Activated T-helper 2 cell treated with anti-CD3 and anti-CD28 coated beads, Interferon-gamma antibody, Interleukin-2, Interleukin-4, amounts not matched to agents 10 μg/mL and 5 μg/mL and 100 μg/mL, durations not matched to agents 14 hours and 24 hours and 36 hours (primary cell): ENCODE measurements at regions of chr22 and their contacts with region 1.

Region 1: DNA sequence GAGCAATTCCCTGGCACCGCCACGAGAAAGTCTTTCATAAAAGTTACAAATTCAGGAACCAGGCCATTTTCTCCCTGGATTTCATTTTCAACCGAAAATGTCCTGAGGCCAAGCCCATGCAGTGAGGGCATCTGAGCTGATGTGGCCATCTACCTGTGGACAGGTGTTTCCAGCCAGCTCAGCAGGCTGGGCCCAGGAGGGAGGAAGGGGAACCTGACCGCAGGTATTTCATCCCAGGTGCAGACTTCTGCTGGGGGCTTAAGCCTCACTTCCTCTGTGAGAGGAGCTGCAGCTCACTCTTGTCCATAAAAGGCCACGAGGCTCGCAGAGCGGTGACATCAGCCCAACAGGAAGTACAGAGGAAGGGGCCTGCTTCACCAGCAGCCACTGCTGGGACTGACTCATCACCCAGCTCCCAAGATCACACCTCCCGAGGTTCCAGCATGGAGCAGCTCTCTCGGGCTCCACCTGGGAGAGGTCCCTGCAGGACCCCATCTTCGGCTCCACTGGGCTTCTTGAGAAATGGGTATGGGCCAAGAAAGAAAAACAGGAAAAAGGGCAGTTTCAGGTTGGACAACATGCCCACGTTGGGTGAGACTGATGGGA is 56.4 kb downstream of the MYH9 start:
- DNase-seq: peak; percentile 80
- H3K4me3 Mint-ChIP-seq: peak overlapping the region; percentile 90
- H3K27ac Mint-ChIP-seq: peak overlapping the region; percentile 99
- H3K4me1 Mint-ChIP-seq: peaks cover 88% of the 10 kb centered on the region
- H3K27me3 Mint-ChIP-seq: no peaks in the 10 kb centered on the region

Region 2: GRCh38 chr22:36359181-36359996 is 28.0 kb after region 1 on chr22:
- intact Hi-C with region 1: loop called (anchors 1 kb)
- DNase-seq: no peak
- H3K4me3 Mint-ChIP-seq: peak overlapping the region; percentile 64
- H3K27ac Mint-ChIP-seq: peak overlapping the region; percentile 85
- H3K4me1 Mint-ChIP-seq: peaks cover 78% of the 10 kb centered on the region
- H3K27me3 Mint-ChIP-seq: no peaks in the 10 kb centered on the region

Region 3: DNA sequence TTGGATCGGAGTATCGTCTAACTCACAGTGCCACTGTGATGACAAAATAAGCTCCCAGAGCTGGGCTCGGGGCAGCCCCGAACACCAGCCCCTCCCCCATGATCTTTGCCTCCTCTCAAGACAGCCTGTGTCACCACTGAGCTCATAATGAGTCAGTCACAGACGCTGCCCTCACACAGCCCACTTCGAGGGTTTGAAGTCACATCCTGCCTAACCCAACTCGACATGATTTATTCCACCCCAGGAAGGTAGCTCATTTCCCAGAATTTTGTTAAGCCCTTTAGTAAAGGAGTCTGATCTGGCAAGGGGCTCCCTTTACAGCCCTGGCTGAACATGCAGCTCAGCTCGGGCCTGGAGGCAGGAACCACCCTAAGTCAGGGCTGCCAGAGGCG is 33.6 kb after region 1 on chr22:
- intact Hi-C with region 1: loop called (anchors 1 kb)
- DNase-seq: peak; percentile 80
- H3K4me3 Mint-ChIP-seq: peak overlapping the region; percentile 44
- H3K27ac Mint-ChIP-seq: peak overlapping the region; percentile 93
- H3K4me1 Mint-ChIP-seq: peaks cover 80% of the 10 kb centered on the region
- H3K27me3 Mint-ChIP-seq: no peaks in the 10 kb centered on the region

Region 4: GRCh38 chr22:36377022-36377631 is 45.7 kb after region 1 on chr22:
- intact Hi-C with region 1: loop called (anchors 2 kb)
- DNase-seq: peak; percentile 48
- H3K4me3 Mint-ChIP-seq: peak overlapping the region; percentile 81
- H3K27ac Mint-ChIP-seq: peak overlapping the region; percentile 97
- H3K4me1 Mint-ChIP-seq: peaks cover 85% of the 10 kb centered on the region
- H3K27me3 Mint-ChIP-seq: no peaks in the 10 kb centered on the region

Region 5: GRCh38 chr22:36454916-36455570 is 123.6 kb after region 1 on chr22:
- intact Hi-C with region 1: loop called (anchors 5 kb)
- DNase-seq: peak; percentile 95
- H3K4me3 Mint-ChIP-seq: peak overlapping the region; percentile 69
- H3K27ac Mint-ChIP-seq: peak overlapping the region; percentile 60
- H3K4me1 Mint-ChIP-seq: peaks cover 35% of the 10 kb centered on the region
- H3K27me3 Mint-ChIP-seq: no peaks in the 10 kb centered on the region